MCF 10A (cell line): ENCODE measurements at regions of chr14 and their contacts with region 1.

Region 1: GRCh38 chr14:61761959-61762786 is at the start of gene SNAPC1:
- DNase-seq: peak; percentile 99
- H3K4me3 Mint-ChIP-seq: peak within 1 kb of the TSS; percentile 92
- H3K27ac Mint-ChIP-seq: peak within 1 kb of the TSS; percentile 91
- H3K4me1 Mint-ChIP-seq: peaks cover 21% of the 10 kb centered on the region
- H3K27me3 Mint-ChIP-seq: no peaks in the 10 kb centered on the region
- CTCF ChIP-seq: no peak
- total RNA-seq, gene SNAPC1: 18.4 and 21.0 TPM in 2 replicates

Region 2: GRCh38 chr14:61381547-61381946 is 380.6 kb before region 1 on chr14:
- CTCF ChIA-PET with region 1: no interaction called
- POLR2A ChIA-PET with region 1: no interaction called
- intact Hi-C with region 1: no loop called
- DNase-seq: peak; percentile 46
- H3K4me3 Mint-ChIP-seq: no peak overlapping the region
- H3K27ac Mint-ChIP-seq: no peak overlapping the region
- H3K4me1 Mint-ChIP-seq: peaks cover 6% of the 10 kb centered on the region
- H3K27me3 Mint-ChIP-seq: no peaks in the 10 kb centered on the region
- CTCF ChIP-seq: no peak

Region 3: GRCh38 chr14:61744239-61744638 is 17.9 kb before region 1 on chr14:
- CTCF ChIA-PET with region 1: interaction called, 4 read pairs
- POLR2A ChIA-PET with region 1: interaction called, 158 read pairs
- intact Hi-C with region 1: no loop called
- DNase-seq: no peak
- H3K4me3 Mint-ChIP-seq: no peak overlapping the region
- H3K27ac Mint-ChIP-seq: no peak overlapping the region
- H3K4me1 Mint-ChIP-seq: peaks cover 6% of the 10 kb centered on the region
- H3K27me3 Mint-ChIP-seq: no peaks in the 10 kb centered on the region
- CTCF ChIP-seq: no peak

Region 4: GRCh38 chr14:61750708-61751474 is 11.3 kb before region 1 on chr14:
- CTCF ChIA-PET with region 1: interaction called, 7 read pairs
- POLR2A ChIA-PET with region 1: interaction called, 158 read pairs
- intact Hi-C with region 1: no loop called
- DNase-seq: peak; percentile 87
- H3K4me3 Mint-ChIP-seq: peak overlapping the region; percentile 78
- H3K27ac Mint-ChIP-seq: peak overlapping the region; percentile 70
- H3K4me1 Mint-ChIP-seq: peaks cover 17% of the 10 kb centered on the region
- H3K27me3 Mint-ChIP-seq: no peaks in the 10 kb centered on the region
- CTCF ChIP-seq: no peak